ENCODE measurements at regions of chr11 and their contacts with region 1.

Region 1: GRCh38 chr11:129922674-129923073 is 27.3 kb upstream of the NFRKB start:
- DNase-seq: no peak
- ATAC-seq: no peak
- H3K4me3 ChIP-seq: no peak overlapping the region
- H3K27ac ChIP-seq: no peak overlapping the region
- H3K4me1 ChIP-seq: no peaks in the 10 kb centered on the region
- H3K27me3 ChIP-seq: no peaks in the 10 kb centered on the region

Region 2: GRCh38 chr11:129695575-129696308 is 226.9 kb before region 1 on chr11:
- intact Hi-C with region 1: no loop called
- DNase-seq: peak; percentile 52 to 71 (median 67)
- ATAC-seq: peak; percentile 75 to 83
- H3K4me3 ChIP-seq: peak overlapping the region; percentile 26
- H3K27ac ChIP-seq: no peak overlapping the region
- H3K4me1 ChIP-seq: no peaks in the 10 kb centered on the region
- H3K27me3 ChIP-seq: no peaks in the 10 kb centered on the region

Region 3: DNA sequence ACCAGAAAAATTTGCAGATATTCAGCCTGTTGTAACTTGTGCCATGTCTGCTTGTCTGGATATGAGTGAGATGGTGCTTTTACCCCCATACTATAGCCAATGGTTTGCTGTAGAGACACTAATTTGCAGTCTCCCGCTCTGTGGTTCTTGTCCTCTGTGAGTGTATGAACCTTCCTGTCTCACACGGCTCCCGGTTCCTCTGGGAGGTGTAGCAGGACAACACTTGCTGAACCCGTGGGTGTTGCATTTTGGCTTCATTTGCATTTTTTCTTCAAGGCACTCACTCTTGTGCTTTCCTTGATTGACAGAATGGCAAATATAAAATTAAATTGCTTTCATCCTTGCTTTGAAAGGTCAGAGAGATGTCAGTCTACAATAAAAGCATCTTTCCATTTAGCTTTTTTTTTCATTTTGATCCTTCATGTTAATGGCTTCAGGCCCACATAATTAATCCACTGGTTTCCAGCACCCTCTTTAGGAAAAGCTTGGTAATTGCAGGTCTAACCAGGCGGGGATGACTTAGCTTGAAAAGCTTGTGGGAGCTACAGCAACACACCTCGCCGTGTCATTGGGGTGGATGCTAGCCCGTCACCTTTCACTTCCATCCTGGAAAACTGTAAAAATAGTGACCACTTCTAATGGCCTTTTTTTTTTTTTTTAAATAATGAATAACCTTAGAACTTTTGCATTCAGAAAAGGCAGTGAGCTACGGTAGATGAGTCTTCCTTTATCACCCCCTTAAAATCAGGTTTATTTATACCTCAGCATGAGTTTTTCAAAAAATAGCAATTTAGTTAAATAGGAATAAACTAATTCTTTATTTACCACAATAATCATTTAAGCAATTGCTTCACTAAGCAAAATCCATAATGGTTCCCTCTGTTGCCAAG is 209.5 kb after region 1 on chr11:
- intact Hi-C with region 1: loop called (anchors 1 to 5 kb)
- DNase-seq: no peak
- ATAC-seq: peak; percentile 62 to 72
- H3K4me3 ChIP-seq: no peak overlapping the region
- H3K27ac ChIP-seq: no peak overlapping the region
- H3K4me1 ChIP-seq: no peaks in the 10 kb centered on the region
- H3K27me3 ChIP-seq: no peaks in the 10 kb centered on the region

Measured in right cardiac atrium (tissue), 5 donors.